Breast epithelium (tissue), 4 donors: ENCODE measurements at regions of chr6 and their contacts with region 1.

Region 1: DNA sequence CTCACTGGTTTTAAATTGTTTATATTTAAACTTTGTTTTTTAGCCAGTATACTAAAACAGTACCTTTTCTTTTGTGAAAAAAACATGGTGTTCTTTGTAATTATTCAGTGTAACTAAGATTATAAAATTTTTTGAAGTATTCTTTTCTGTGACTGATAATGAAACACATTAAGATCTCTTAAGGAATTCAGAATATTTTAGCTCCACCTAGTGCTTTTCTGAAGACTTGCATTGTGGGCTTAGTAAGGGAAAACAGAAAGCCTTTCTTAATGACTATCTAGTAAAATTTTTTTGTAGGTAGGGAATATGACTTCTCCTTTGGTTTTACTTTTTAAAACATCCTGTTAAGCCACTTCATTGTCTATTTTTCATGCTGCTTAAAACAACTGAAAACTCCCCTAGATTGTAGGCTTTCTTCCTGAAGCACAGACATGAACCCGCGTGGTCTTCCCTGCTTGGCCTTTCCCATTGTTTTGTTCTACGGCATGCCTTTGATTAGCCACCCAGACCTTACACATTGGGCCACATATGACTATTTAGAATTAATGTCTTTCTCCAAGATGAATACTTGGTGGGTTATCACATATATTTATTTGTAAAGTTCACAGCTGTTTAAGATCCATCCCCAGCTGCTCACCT is 72.1 kb downstream of the AFDN start:
- DNase-seq: no peak
- H3K4me3 ChIP-seq: no peak overlapping the region
- H3K27ac ChIP-seq: no peak overlapping the region
- H3K4me1 ChIP-seq: no peaks in the 10 kb centered on the region
- H3K27me3 ChIP-seq: no peaks in the 10 kb centered on the region
- CTCF ChIP-seq: peak; percentile 66 to 81 (median 72)
- POLR2A ChIP-seq: no peak

Region 2: DNA sequence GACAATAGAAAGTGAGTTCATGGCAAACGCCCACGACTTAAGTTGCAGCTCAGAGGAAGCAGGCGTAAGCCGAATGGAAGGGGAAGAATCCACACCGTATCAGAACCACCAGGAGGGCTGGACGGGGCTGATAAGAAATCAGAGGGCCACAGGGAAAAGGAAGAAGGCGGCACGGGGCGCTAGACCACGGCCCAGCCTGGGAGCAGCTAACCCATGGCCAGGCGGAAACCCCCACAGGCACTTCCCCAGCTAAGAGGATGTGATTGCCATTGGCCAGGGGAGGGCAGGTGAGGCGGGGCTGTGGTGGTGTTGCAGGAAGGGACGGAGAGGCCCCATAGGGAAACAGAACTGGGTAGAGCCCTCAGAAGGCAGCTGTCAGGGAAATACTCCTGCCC is 246.1 kb before region 1 on chr6:
- intact Hi-C with region 1: no loop called
- DNase-seq: no peak
- H3K4me3 ChIP-seq: no peak overlapping the region
- H3K27ac ChIP-seq: no peak overlapping the region
- H3K4me1 ChIP-seq: no peaks in the 10 kb centered on the region
- H3K27me3 ChIP-seq: no peaks in the 10 kb centered on the region
- CTCF ChIP-seq: no peak
- POLR2A ChIP-seq: no peak

Region 3: DNA sequence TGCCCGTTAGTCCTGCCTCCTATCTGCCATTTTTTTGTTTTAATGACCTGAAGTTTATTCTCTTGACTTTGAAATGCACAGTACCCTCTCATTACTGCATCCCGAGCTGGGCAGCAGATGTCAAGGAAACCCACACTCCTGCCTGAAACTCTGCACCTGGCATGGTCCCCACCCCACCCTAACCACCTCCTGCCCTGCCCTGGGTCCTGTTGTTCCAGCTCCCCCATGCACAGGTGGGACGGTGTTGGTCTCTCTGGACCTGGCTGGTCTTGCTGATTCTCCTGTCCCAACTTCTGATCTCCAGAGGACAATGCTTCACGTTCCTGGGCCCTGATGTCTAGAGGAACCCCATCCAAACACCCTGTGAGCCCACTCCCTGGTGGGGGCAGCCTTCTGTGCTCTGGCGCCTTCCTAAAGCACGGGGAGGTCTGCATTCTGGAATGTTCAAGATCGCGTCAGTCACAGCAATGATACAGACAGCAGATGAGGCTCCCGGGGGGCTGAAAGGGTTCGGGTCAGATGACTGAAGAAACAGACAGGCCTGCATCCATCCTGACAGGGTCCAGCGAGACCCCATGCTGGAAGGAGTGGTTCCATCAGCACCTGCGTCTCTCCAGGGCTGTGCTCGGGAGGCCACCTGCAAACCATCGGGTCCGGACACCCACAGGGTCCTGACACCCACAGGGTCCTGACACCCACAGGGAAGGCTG is 1926.2 kb after region 1 on chr6:
- intact Hi-C with region 1: loop called (anchors 5 kb)
- DNase-seq: no peak
- H3K4me3 ChIP-seq: no peak overlapping the region
- H3K27ac ChIP-seq: no peak overlapping the region
- H3K4me1 ChIP-seq: no peaks in the 10 kb centered on the region
- H3K27me3 ChIP-seq: no peaks in the 10 kb centered on the region
- CTCF ChIP-seq: no peak
- POLR2A ChIP-seq: no peak